HepG2 (cell line): ENCODE measurements at regions of chr15 and their contacts with region 1.

Region 1: DNA sequence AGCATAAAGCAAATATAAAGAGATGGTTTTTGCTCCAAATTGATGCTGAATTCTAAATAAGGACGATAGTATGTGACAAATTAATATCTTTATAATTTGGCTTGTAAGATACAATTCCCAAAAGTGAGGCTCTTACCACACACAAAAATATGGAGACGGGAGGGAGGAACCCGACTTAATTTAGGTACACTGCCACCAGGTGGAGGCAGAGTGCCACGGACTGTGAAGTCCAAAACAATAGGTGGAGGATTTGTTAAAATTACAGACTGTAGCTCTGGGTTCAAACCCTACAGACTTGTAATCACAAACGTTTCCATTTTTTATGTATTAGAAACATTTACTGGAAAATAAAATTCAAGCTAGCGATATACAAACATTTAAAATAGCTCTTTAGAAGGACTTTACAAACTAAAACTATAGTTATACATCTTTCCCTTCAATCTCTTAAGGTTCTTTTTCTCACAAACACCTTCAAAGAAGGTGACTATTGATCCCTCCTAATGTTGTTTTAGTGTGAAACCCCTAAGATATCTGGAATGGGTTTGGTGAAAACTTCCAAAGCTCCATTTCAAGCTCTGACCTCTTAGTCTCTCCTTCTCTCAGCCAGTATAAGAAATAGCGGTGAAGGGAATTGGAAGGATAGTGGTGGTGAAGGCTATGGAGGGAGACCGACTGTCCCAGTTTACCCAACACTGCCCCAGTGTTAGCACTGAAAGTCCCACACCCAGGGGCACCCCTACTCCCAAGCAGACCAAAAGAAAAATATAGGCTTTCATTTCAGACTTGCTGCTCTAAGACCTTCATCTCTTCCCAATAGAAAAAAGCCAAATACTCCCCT is 89.7 kb downstream of the AQP9 start:
- DNase-seq: peak; percentile 62
- ATAC-seq: peak; percentile 65
- H3K4me3 ChIP-seq: no peak overlapping the region
- H3K27ac ChIP-seq: no peak overlapping the region
- H3K4me1 ChIP-seq: peaks cover 18% of the 10 kb centered on the region; the same call in 1 of the 2 replicates
- H3K27me3 ChIP-seq: no peaks in the 10 kb centered on the region
- CTCF ChIP-seq: peak; percentile 84
- EP300 ChIP-seq: no peak
- POLR2A ChIP-seq: no peak
- RAD21 ChIP-seq: peak; percentile 83; the same call in 1 of the 2 replicates

Region 2: DNA sequence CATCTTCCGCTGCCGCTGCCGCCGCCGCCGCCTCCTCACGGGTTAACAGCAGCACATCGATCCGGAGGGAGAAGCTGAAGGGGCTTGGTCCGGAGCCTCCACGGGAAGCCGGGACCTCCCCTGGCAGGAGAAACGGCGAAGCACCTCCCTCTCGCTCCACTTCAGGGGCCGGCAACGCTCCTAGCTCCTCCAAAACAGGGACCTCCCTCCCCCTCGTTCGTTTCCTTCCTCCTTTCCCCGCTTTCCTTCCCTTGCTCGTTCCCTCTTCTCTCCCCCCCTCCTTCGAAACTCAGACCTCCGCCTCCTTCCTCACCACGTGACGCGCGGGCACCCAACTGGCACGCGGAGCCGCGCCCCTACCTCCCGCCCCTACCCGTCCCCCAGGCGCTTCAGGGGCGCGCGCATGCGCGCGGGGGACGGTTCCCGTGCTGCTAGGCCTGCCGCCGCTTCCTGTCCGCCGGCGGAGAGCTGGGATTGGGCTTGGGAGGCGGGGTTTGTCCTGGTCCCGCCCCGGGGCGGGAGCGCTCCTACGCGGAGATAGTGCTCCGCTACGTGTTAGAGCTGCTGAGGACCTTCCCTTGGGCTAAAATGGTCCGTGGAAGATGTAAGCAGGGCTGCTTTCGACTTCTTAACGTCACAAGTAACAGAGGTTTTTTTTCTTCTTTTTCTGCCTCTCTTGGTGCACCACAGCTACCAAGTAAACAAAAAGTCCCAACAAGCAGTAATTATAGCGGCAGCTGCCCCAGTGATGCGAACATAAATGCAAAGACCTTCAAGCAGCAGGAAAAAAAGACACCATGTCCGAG is 521.8 kb after region 1 on chr15 and contains the start of gene ADAM10:
- CTCF ChIA-PET with region 1: no interaction called
- POLR2A ChIA-PET with region 1: no interaction called
- in situ Hi-C with region 1: loop called (anchors 10 kb)
- intact Hi-C with region 1: no loop called
- DNase-seq: peak; percentile 95
- ATAC-seq: peak; percentile 96
- H3K4me3 ChIP-seq: peak within 1 kb of the TSS; percentile 91 to 99 (median 95)
- H3K27ac ChIP-seq: peak within 1 kb of the TSS; percentile 97
- H3K4me1 ChIP-seq: peaks cover 32% of the 10 kb centered on the region
- H3K27me3 ChIP-seq: no peaks in the 10 kb centered on the region; a peak in 1 of 5 replicates
- CTCF ChIP-seq: peak; percentile 21; the same call in 1 of the 2 replicates
- EP300 ChIP-seq: no peak
- POLR2A ChIP-seq: peak; percentile 66 to 83
- RAD21 ChIP-seq: no peak
- total RNA-seq, gene ADAM10: 86.8 and 125 TPM in 2 replicates

Region 3: DNA sequence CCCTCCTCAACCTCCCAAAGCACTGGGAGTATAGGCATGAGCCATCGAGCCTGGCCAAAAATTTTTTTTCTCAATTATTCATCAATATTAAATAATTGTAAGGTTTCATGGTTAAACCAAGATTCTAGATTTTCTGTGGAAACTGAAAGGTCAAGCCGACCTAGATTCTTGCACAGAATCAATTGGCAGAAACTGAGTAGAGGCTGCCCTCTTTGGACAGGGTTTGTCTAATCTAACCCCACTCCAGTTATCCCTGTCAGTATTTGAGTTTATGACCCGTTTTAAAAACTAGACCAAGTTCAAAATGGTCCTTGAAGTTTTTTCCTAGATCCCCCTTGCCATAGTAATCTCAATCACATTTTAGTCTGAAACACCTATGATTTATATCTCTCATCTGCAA is 530.2 kb after region 1 on chr15:
- CTCF ChIA-PET with region 1: no interaction called
- POLR2A ChIA-PET with region 1: no interaction called
- in situ Hi-C with region 1: loop called (anchors 10 kb)
- intact Hi-C with region 1: loop called (anchors 5 kb)
- DNase-seq: no peak
- ATAC-seq: peak; percentile 69
- H3K4me3 ChIP-seq: no peak overlapping the region
- H3K27ac ChIP-seq: no peak overlapping the region
- H3K4me1 ChIP-seq: peaks cover 10% of the 10 kb centered on the region; the same call in 1 of the 2 replicates
- H3K27me3 ChIP-seq: no peaks in the 10 kb centered on the region
- CTCF ChIP-seq: peak; percentile 60
- EP300 ChIP-seq: no peak
- POLR2A ChIP-seq: no peak
- RAD21 ChIP-seq: no peak